Activated CD4-positive, alpha-beta memory T cell treated with anti-CD3 and anti-CD28 coated beads, Interleukin-2, amount 10 ng/mL, durations not matched to agents 7 days and 5 days (primary cell): ENCODE measurements at regions of chr2 and their contacts with region 1.

Region 1: DNA sequence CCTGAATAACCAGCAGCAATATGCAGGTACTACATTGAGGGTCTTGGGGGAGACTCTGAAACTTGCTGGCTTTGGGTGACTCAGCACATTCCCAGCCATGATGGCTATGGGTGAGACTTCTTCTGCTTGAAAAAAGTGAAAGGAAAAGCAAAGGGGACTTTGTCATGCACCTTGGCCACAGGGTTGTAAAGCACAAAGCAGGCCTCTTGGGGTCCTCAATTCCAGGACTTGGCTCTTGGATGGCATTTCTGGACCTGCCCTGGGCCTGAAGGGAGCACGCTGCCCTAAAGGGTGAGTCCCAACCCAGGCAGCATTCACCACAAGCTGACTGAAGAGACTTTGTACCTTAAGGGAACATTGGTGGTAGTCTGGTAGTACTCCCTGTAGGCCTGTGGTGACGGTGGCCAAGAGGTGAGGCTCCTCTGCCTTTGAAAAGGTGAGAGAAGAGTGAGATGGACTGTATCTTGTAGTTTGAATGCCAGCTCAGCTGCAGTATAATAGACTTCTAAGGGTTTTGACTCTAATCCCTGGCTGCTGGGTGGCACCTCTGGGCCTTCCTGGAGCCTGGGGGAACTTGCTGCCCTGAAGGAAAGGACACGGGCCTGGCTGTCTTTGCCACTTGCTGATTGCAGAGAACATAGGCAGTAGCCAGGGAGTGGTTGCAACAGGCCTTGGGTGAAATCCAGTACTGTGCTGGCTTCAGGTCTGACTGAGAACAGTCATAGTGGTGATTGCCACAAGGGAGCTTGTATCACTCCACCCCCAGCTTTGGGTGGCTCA is 36.5 kb upstream of the CYTIP start:
- DNase-seq: peak; percentile 58
- H3K4me3 Mint-ChIP-seq: peak overlapping the region; percentile 55
- H3K27ac Mint-ChIP-seq: peak overlapping the region; percentile 87
- H3K4me1 Mint-ChIP-seq: peaks cover 72% of the 10 kb centered on the region
- H3K27me3 Mint-ChIP-seq: no peaks in the 10 kb centered on the region

Region 2: GRCh38 chr2:157420771-157421323 is 59.5 kb before region 1 on chr2:
- CTCF ChIA-PET with region 1: no interaction called
- POLR2A ChIA-PET with region 1: interaction called, 28 read pairs
- DNase-seq: no peak
- H3K4me3 Mint-ChIP-seq: no peak overlapping the region
- H3K27ac Mint-ChIP-seq: peak overlapping the region; percentile 88
- H3K4me1 Mint-ChIP-seq: peaks cover 77% of the 10 kb centered on the region
- H3K27me3 Mint-ChIP-seq: no peaks in the 10 kb centered on the region

Region 3: GRCh38 chr2:157460384-157460837 is 20.0 kb before region 1 on chr2:
- CTCF ChIA-PET with region 1: interaction called, 3 read pairs
- POLR2A ChIA-PET with region 1: interaction called, 18 read pairs
- DNase-seq: no peak
- H3K4me3 Mint-ChIP-seq: no peak overlapping the region
- H3K27ac Mint-ChIP-seq: peak overlapping the region; percentile 23
- H3K4me1 Mint-ChIP-seq: peaks cover 88% of the 10 kb centered on the region
- H3K27me3 Mint-ChIP-seq: no peaks in the 10 kb centered on the region

Region 4: GRCh38 chr2:157492189-157492773 is 11.9 kb after region 1 on chr2:
- CTCF ChIA-PET with region 1: interaction called, 18 read pairs
- POLR2A ChIA-PET with region 1: interaction called, 9 read pairs
- DNase-seq: peak; percentile 79
- H3K4me3 Mint-ChIP-seq: no peak overlapping the region
- H3K27ac Mint-ChIP-seq: no peak overlapping the region
- H3K4me1 Mint-ChIP-seq: peaks cover 66% of the 10 kb centered on the region
- H3K27me3 Mint-ChIP-seq: no peaks in the 10 kb centered on the region